Mucosa of descending colon (tissue), 3 donors: ENCODE measurements at regions of chr7 and their contacts with region 1.

Region 1: GRCh38 chr7:122528879-122529481 is 169.9 kb downstream of the RNF133 start:
- DNase-seq: no peak
- ATAC-seq: no peak
- H3K4me3 ChIP-seq: no peak overlapping the region
- H3K4me1 ChIP-seq: no peaks in the 10 kb centered on the region
- CTCF ChIP-seq: peak; percentile 25

Region 2: GRCh38 chr7:122092964-122093797 is 435.8 kb before region 1 on chr7:
- intact Hi-C with region 1: loop called in 1 of 2 experiments (anchors 10 kb)
- DNase-seq: peak in 2 of 3 donors; percentile 42 to 85
- ATAC-seq: peak; percentile 81
- H3K4me3 ChIP-seq: no peak overlapping the region
- H3K4me1 ChIP-seq: no peaks in the 10 kb centered on the region
- CTCF ChIP-seq: peak; percentile 77

Region 3: DNA sequence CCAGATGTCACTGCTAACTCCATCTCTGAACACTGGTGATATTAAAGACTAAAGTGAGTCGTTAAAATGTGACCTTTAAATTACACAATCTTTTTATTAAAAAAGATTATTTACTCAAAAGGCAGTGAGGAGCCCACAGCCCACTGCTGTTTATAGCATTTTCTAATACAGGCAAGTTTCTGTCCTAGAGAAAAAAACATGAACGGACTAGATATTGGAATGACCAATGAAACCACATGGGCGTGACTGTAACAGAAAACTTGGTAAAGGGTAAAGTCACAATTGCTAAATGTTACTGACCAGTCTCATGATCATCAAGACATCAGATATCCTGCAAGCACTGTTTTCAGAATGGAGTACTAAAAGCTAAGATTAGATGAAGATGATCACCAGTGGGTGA is 303.1 kb before region 1 on chr7:
- intact Hi-C with region 1: loop called in 1 of 2 experiments (anchors 10 kb)
- DNase-seq: no peak
- ATAC-seq: no peak
- H3K4me3 ChIP-seq: no peak overlapping the region
- H3K4me1 ChIP-seq: no peaks in the 10 kb centered on the region
- CTCF ChIP-seq: no peak